AG04450 (cell line): ENCODE measurements at regions of chr3 and their contacts with region 1.

Region 1: DNA sequence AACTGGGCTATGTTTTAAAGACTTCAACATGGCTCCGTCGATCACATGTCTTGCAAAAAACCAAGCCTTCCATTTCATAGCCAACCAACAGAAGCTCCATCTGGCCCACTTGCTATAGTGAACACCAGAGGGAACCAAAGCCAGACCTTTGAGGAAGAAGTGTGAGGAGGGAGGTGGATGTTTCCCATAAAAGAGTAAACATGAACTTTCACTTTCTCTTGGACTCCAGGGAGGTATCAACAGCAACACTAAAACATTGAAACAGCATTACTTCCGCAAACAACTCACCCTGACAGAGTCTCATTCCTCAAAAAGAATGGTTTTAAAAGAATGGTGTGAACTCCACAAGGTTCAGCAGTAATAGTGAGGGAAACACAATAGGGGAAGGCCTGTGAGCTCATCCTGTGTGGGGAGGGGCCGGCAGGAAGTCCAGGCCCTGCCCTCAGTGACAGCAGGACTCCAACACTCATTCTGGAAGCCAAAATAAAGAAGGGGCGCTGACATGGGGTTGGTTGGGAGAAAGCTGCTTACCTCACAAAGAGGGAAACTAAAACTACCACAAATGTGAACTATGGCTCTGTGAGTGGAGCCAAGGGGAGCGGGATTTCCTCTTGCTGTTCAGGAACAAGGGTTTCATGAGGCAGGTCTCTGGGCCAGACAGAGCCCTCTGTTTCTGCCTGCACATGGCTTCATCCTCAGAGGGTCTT is 59.0 kb upstream of the IL12A start:
- DNase-seq: peak; percentile 58
- H3K4me3 ChIP-seq: no peak overlapping the region
- H3K27ac ChIP-seq: peak overlapping the region; percentile 92
- H3K27me3 ChIP-seq: no peaks in the 10 kb centered on the region
- CTCF ChIP-seq: peak; percentile 69

Region 2: DNA sequence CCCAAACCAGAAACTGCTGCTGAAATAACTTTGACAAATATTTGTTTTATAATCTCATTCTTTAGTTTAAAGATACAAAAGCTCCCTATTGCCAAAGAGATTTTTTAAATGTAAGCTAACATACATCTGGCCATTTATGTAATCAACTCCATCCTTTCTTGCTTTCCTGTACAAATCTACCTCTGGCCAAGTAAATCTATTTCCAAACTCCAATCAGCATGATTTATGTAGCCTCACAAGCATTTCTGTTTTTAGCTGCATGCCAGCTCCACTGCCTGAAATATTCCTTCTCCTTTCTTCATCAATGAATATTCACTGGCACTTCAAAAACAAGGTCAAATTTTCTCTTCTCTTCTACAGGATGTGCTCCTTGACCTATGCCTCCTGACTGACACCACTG is 1903.4 kb before region 1 on chr3:
- CTCF ChIA-PET with region 1: no interaction called
- POLR2A ChIA-PET with region 1: no interaction called
- DNase-seq: no peak
- H3K4me3 ChIP-seq: no peak overlapping the region
- H3K27ac ChIP-seq: no peak overlapping the region
- H3K27me3 ChIP-seq: no peaks in the 10 kb centered on the region
- CTCF ChIP-seq: no peak

Region 3: GRCh38 chr3:159839561-159840379 is 89.8 kb before region 1 on chr3:
- CTCF ChIA-PET with region 1: no interaction called
- POLR2A ChIA-PET with region 1: interaction called, 13 read pairs
- DNase-seq: no peak
- H3K4me3 ChIP-seq: no peak within 1 kb of the TSS
- H3K27ac ChIP-seq: no peak within 1 kb of the TSS
- H3K27me3 ChIP-seq: no peaks in the 10 kb centered on the region
- CTCF ChIP-seq: no peak

Region 4: GRCh38 chr3:159914426-159914825 is 15.2 kb before region 1 on chr3:
- CTCF ChIA-PET with region 1: interaction called, 10 read pairs
- POLR2A ChIA-PET with region 1: no interaction called
- DNase-seq: no peak
- H3K4me3 ChIP-seq: no peak overlapping the region
- H3K27ac ChIP-seq: no peak overlapping the region
- H3K27me3 ChIP-seq: no peaks in the 10 kb centered on the region
- CTCF ChIP-seq: no peak

Region 5: GRCh38 chr3:159947220-159947619 is 17.6 kb after region 1 on chr3:
- CTCF ChIA-PET with region 1: interaction called, 14 read pairs
- POLR2A ChIA-PET with region 1: interaction called, 4 read pairs
- DNase-seq: peak; percentile 61
- H3K4me3 ChIP-seq: no peak overlapping the region
- H3K27ac ChIP-seq: no peak overlapping the region
- H3K27me3 ChIP-seq: no peaks in the 10 kb centered on the region
- CTCF ChIP-seq: no peak

Region 6: GRCh38 chr3:160099834-160100233 is 170.2 kb after region 1 on chr3:
- CTCF ChIA-PET with region 1: no interaction called
- POLR2A ChIA-PET with region 1: no interaction called
- DNase-seq: no peak
- H3K4me3 ChIP-seq: no peak overlapping the region
- H3K27ac ChIP-seq: no peak overlapping the region
- H3K27me3 ChIP-seq: peaks cover 4% of the 10 kb centered on the region
- CTCF ChIP-seq: no peak

Region 7: DNA sequence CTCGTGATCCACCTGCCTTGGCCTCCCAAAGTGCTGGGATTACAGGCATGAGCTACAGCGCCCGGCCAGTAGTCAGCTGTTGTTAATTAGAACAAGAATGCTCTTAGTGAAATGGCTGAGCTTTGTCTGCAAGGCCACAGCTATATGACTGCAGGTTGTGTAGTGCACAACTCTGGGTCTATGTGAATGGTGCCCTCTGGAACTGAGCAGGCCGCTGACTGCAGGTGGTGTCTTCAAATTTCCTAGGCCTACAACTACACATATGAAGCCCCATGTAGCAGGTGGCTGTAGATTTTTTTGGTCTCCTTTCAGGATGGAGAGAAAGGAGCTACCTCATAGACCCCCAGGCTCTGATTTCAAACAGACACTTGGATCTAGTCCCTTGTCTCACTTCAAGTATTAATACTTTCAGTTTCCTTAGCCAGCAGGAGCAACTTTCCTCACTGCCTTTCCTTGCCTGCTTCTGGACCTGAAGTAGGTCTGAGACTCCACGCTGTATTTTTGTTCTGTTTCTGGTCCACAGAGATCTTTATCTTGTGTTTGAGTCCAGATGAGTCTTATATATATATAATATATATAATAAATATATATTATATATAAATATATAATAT is 382.5 kb after region 1 on chr3:
- CTCF ChIA-PET with region 1: no interaction called
- POLR2A ChIA-PET with region 1: no interaction called
- DNase-seq: no peak
- H3K4me3 ChIP-seq: no peak overlapping the region
- H3K27ac ChIP-seq: no peak overlapping the region
- H3K27me3 ChIP-seq: no peaks in the 10 kb centered on the region
- CTCF ChIP-seq: no peak